ENCODE measurements at regions of chr17 and their contacts with region 1.

Region 1: GRCh38 chr17:28416703-28417311 is 10.8 kb upstream of the SLC46A1 start:
- DNase-seq: peak; percentile 76
- H3K4me3 Mint-ChIP-seq: no peak overlapping the region
- H3K27ac Mint-ChIP-seq: no peak overlapping the region
- H3K4me1 Mint-ChIP-seq: peaks cover 7% of the 10 kb centered on the region
- H3K27me3 Mint-ChIP-seq: no peaks in the 10 kb centered on the region
- CTCF ChIP-seq: peak; percentile 78

Region 2: GRCh38 chr17:28240991-28241340 is 175.8 kb before region 1 on chr17:
- CTCF ChIA-PET with region 1: interaction called, 7 read pairs
- POLR2A ChIA-PET with region 1: no interaction called
- intact Hi-C with region 1: loop called (anchors 2 kb)
- DNase-seq: no peak
- H3K4me3 Mint-ChIP-seq: no peak overlapping the region
- H3K27ac Mint-ChIP-seq: no peak overlapping the region
- H3K4me1 Mint-ChIP-seq: no peaks in the 10 kb centered on the region
- H3K27me3 Mint-ChIP-seq: peaks cover 6% of the 10 kb centered on the region
- CTCF ChIP-seq: no peak

Region 3: GRCh38 chr17:28371245-28372202 is 45.3 kb before region 1 on chr17 and contains the start of gene SARM1:
- CTCF ChIA-PET with region 1: interaction called, 16 read pairs
- POLR2A ChIA-PET with region 1: no interaction called
- intact Hi-C with region 1: no loop called
- DNase-seq: peak; percentile 27
- H3K4me3 Mint-ChIP-seq: peak within 1 kb of the TSS; percentile 70
- H3K27ac Mint-ChIP-seq: peak within 1 kb of the TSS; percentile 70
- H3K4me1 Mint-ChIP-seq: peaks cover 5% of the 10 kb centered on the region
- H3K27me3 Mint-ChIP-seq: no peaks in the 10 kb centered on the region
- CTCF ChIP-seq: no peak
- total RNA-seq, gene SARM1: 0.63 and 1.0 TPM in 2 replicates

Region 4: GRCh38 chr17:28384281-28385036 is 32.3 kb before region 1 on chr17:
- CTCF ChIA-PET with region 1: interaction called, 11 read pairs
- POLR2A ChIA-PET with region 1: interaction called, 4 read pairs
- intact Hi-C with region 1: no loop called
- DNase-seq: no peak
- H3K4me3 Mint-ChIP-seq: no peak overlapping the region
- H3K27ac Mint-ChIP-seq: no peak overlapping the region
- H3K4me1 Mint-ChIP-seq: peaks cover 13% of the 10 kb centered on the region
- H3K27me3 Mint-ChIP-seq: no peaks in the 10 kb centered on the region
- CTCF ChIP-seq: no peak

Region 5: GRCh38 chr17:28390984-28391800 is 25.6 kb before region 1 on chr17:
- CTCF ChIA-PET with region 1: interaction called, 12 read pairs
- POLR2A ChIA-PET with region 1: interaction called, 8 read pairs
- intact Hi-C with region 1: no loop called
- DNase-seq: no peak
- H3K4me3 Mint-ChIP-seq: no peak overlapping the region
- H3K27ac Mint-ChIP-seq: no peak overlapping the region
- H3K4me1 Mint-ChIP-seq: peaks cover 12% of the 10 kb centered on the region
- H3K27me3 Mint-ChIP-seq: no peaks in the 10 kb centered on the region
- CTCF ChIP-seq: no peak

Region 6: GRCh38 chr17:28405632-28406472 is 11.0 kb before region 1 on chr17 and contains the start of gene SLC46A1:
- CTCF ChIA-PET with region 1: interaction called, 23 read pairs
- POLR2A ChIA-PET with region 1: interaction called, 15 read pairs
- intact Hi-C with region 1: no loop called
- DNase-seq: peak; percentile 44
- H3K4me3 Mint-ChIP-seq: peak within 1 kb of the TSS; percentile 86
- H3K27ac Mint-ChIP-seq: no peak within 1 kb of the TSS
- H3K4me1 Mint-ChIP-seq: peaks cover 23% of the 10 kb centered on the region
- H3K27me3 Mint-ChIP-seq: no peaks in the 10 kb centered on the region
- CTCF ChIP-seq: no peak
- total RNA-seq, gene SLC46A1: 18.4 and 20.1 TPM in 2 replicates

Region 7: GRCh38 chr17:28460901-28461300 is 44.1 kb after region 1 on chr17:
- CTCF ChIA-PET with region 1: no interaction called
- POLR2A ChIA-PET with region 1: no interaction called
- intact Hi-C with region 1: no loop called
- DNase-seq: no peak
- H3K4me3 Mint-ChIP-seq: no peak overlapping the region
- H3K27ac Mint-ChIP-seq: no peak overlapping the region
- H3K4me1 Mint-ChIP-seq: no peaks in the 10 kb centered on the region
- H3K27me3 Mint-ChIP-seq: peaks cover 6% of the 10 kb centered on the region
- CTCF ChIP-seq: no peak

Region 8: GRCh38 chr17:28534740-28535375 is 118.1 kb after region 1 on chr17:
- CTCF ChIA-PET with region 1: no interaction called
- POLR2A ChIA-PET with region 1: no interaction called
- intact Hi-C with region 1: no loop called
- DNase-seq: no peak
- H3K4me3 Mint-ChIP-seq: no peak overlapping the region
- H3K27ac Mint-ChIP-seq: no peak overlapping the region
- H3K4me1 Mint-ChIP-seq: peaks cover 14% of the 10 kb centered on the region
- H3K27me3 Mint-ChIP-seq: peaks cover 12% of the 10 kb centered on the region
- CTCF ChIP-seq: no peak

Region 9: DNA sequence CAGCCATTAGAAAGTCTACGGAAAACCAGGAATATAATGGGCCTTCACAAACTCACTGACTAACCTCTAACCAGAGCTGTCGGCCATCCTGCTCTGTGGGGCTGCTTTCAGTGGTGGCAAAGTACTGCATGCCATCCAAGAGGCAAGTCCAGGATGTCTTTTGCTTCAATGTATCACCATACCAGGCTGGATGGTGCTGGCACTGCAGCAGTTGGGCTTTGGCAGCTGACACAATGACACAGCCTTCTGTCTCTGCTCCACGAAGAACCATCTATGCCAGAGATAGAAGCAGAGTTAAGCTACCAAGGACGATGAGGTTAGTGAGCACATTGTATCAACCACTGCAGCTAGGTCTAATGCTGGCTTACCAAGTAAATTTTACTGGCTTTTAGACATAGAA is 206.9 kb after region 1 on chr17:
- CTCF ChIA-PET with region 1: no interaction called
- POLR2A ChIA-PET with region 1: no interaction called
- intact Hi-C with region 1: no loop called
- DNase-seq: no peak
- H3K4me3 Mint-ChIP-seq: no peak overlapping the region
- H3K27ac Mint-ChIP-seq: no peak overlapping the region
- H3K4me1 Mint-ChIP-seq: peaks cover 10% of the 10 kb centered on the region
- H3K27me3 Mint-ChIP-seq: no peaks in the 10 kb centered on the region
- CTCF ChIP-seq: no peak

Region 10: DNA sequence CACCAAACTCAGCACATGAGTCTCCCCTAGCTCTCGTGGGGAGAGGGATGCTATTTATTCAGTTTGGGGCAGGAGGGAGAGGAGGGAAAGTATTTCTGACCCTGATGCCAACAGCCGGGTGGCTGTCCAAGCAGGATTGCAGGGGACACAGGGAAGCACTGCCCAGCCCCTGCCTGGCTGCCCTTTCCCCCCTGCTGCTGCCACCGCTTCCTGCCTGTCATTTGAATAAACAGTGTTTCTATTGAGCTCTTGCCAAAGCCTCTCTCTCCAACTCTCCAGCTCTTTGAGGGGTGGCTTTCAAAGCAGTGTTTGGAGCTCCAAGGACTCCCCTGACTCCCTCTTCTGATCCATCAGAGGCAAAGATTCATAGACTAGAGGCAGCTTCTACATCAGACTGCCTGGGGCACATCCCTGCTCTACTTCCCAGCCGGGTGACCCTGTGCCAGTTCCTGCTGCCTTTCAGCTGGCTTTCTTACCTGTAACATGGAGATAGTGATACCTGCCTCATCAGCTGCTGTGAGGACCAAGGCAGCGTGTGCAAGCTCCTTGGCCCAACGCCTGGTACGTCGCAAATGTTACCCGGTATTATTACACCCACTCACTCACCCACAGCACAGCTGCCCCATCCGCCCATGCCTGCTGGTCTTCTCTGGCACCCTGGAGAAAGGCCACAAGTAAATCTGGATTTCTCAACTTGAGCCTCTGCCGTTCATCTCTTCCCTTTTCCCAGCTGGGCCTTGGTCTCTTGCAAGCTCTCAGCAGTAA is 285.4 kb after region 1 on chr17:
- CTCF ChIA-PET with region 1: no interaction called
- POLR2A ChIA-PET with region 1: no interaction called
- intact Hi-C with region 1: no loop called
- DNase-seq: no peak
- H3K4me3 Mint-ChIP-seq: no peak overlapping the region
- H3K27ac Mint-ChIP-seq: no peak overlapping the region
- H3K4me1 Mint-ChIP-seq: no peaks in the 10 kb centered on the region
- H3K27me3 Mint-ChIP-seq: no peaks in the 10 kb centered on the region
- CTCF ChIP-seq: no peak

Measured in MCF 10A (cell line).